Mammary epithelial cell (primary cell): ENCODE measurements at regions of chr4 and their contacts with region 1.

Region 1: DNA sequence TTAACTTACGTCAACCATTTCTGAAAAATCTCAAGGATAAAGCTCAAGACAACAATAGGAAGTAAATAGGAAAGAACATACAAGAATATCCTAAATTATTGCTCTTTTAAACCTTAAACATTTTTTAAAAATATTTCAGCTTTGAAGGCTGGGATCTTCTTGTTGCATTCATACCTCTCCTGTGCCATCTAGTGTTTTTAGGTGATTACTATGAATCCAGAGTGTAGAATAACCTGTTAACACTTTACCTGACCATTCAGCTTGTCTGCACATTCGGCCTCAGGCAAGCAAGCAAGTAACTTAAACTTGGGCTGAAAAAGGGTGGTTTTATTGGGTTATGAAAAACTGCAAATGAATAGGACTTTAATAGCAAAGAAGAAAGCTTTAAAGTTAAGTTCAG is 507.8 kb upstream of the INTU start:
- DNase-seq: peak; percentile 3
- H3K4me3 ChIP-seq: no peak overlapping the region
- H3K27ac ChIP-seq: no peak overlapping the region
- H3K4me1 ChIP-seq: no peaks in the 10 kb centered on the region
- H3K27me3 ChIP-seq: no peaks in the 10 kb centered on the region
- CTCF ChIP-seq: peak; percentile 27 to 57

Region 2: DNA sequence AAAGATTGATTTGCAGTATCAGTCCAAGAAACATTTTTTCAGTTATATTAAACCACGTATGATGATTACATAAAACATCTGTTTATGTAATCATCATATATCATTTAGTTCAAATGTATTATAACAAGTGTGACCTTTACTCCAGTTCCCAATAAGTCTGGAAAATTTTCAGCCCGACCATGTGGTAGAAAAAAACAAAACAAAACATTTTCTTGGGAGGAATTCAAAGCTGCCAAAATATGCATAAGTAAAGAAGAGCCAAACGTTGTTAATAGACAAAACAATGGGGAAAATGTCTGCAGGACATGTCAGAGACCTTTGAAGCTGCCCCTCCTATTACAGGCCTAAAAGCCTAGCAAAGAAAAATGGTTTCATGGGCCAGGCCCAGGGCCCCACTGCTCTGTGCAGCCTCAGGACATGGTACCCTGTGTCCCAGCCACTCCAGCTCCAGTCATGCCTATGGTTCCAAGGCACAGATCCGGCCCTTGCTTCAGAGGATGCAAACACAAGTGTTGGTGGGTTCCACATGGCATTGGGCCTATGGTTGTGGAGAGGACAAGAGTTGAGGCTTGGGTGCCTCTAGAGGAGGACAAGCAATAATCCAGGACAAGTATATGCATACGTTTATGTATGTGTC is 1100.9 kb before region 1 on chr4:
- CTCF ChIA-PET with region 1: no interaction called
- dilution Hi-C with region 1: no loop called
- in situ Hi-C with region 1: no loop called
- intact Hi-C with region 1: no loop called
- DNase-seq: no peak
- H3K4me3 ChIP-seq: no peak overlapping the region
- H3K27ac ChIP-seq: no peak overlapping the region
- H3K4me1 ChIP-seq: no peaks in the 10 kb centered on the region
- H3K27me3 ChIP-seq: no peaks in the 10 kb centered on the region
- CTCF ChIP-seq: no peak

Region 3: DNA sequence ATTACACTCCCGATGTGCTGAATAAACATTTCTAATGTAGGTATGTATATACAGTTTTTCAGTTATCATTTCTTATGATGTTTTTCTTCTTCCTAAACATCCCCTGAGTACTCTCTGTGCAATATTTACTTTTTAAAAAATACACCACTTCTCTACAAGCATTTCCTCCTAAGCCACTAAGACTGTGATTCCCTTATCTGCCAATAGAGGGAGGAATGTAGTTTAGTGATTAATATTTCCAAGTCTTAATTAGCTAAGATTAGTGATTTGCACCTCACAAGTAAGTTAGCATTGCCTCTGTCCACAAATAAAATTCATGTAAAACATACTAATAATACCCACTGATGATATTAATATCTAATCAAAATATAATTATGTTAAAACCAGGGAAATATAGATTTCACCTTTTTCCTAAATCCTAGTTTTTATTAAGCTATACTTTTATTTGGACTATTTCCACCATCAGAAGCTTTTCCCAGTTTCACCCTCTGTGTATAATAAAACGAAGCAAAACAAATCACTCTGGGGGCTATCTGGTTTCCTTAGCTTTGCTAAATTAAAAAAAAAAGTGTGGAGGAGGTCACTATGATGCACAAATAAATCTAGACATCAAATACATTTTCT is 901.0 kb before region 1 on chr4:
- CTCF ChIA-PET with region 1: no interaction called
- dilution Hi-C with region 1: no loop called
- in situ Hi-C with region 1: no loop called
- intact Hi-C with region 1: loop called (anchors 10 kb)
- DNase-seq: peak; percentile 2
- H3K4me3 ChIP-seq: no peak overlapping the region
- H3K27ac ChIP-seq: no peak overlapping the region
- H3K4me1 ChIP-seq: no peaks in the 10 kb centered on the region
- H3K27me3 ChIP-seq: no peaks in the 10 kb centered on the region
- CTCF ChIP-seq: peak; percentile 69 to 74

Region 4: GRCh38 chr4:126627255-126627654 is 497.7 kb before region 1 on chr4:
- CTCF ChIA-PET with region 1: no interaction called
- dilution Hi-C with region 1: no loop called
- in situ Hi-C with region 1: no loop called
- intact Hi-C with region 1: loop called (anchors 2 kb)
- DNase-seq: peak; percentile 12
- H3K4me3 ChIP-seq: no peak overlapping the region
- H3K27ac ChIP-seq: no peak overlapping the region
- H3K4me1 ChIP-seq: no peaks in the 10 kb centered on the region
- H3K27me3 ChIP-seq: no peaks in the 10 kb centered on the region
- CTCF ChIP-seq: peak; percentile 54 to 74

Region 5: DNA sequence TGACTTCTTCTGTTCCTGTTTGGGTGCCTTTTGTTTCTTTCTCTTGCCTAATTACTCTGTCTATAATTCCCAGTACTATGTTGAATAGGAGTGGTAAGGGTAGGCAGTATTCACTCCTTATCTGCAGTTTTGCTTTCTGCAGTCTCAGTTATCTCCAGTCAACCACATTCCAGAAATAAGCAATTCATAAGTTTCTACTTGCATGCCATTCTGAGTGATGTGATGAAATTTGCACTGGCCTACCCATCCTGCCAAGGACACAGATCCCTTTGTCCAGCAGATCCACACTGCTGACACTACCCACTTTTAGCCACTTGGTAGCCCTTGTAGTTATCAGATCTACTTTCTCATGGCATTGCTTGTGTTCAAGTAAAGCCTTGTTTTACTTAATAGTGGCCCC is 463.7 kb before region 1 on chr4:
- CTCF ChIA-PET with region 1: no interaction called
- dilution Hi-C with region 1: no loop called
- in situ Hi-C with region 1: no loop called
- intact Hi-C with region 1: no loop called
- DNase-seq: peak; percentile 8
- H3K4me3 ChIP-seq: no peak overlapping the region
- H3K27ac ChIP-seq: no peak overlapping the region
- H3K4me1 ChIP-seq: no peaks in the 10 kb centered on the region
- H3K27me3 ChIP-seq: no peaks in the 10 kb centered on the region
- CTCF ChIP-seq: no peak

Region 6: DNA sequence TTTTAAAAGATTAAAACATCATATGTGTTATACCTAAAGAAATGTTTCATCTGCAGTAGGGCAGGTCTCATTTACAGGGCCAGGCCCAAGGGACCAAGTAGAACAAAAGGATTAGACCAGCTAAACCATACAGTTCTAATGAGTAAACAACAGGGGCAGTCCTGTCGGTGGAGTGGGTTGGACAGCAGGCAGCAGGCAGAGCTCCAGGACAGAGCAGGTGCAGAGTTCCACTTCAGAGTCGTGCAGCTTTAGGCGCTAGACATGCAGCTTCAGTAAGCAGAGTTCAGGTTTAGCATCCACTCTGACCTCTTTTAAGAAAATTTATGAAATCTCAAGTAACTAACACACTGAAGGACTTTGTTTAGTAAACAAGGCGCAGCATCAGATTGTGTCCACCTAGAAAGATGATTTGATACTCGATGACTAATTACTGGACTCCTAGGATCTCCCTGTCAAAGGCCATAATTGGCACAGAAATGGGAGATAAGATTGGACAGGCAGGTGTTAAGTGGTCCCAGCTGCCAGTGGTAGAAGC is 20.2 kb after region 1 on chr4:
- CTCF ChIA-PET with region 1: no interaction called
- dilution Hi-C with region 1: no loop called
- in situ Hi-C with region 1: no loop called
- intact Hi-C with region 1: no loop called
- DNase-seq: no peak
- H3K4me3 ChIP-seq: no peak overlapping the region
- H3K27ac ChIP-seq: no peak overlapping the region
- H3K4me1 ChIP-seq: no peaks in the 10 kb centered on the region
- H3K27me3 ChIP-seq: no peaks in the 10 kb centered on the region
- CTCF ChIP-seq: no peak

Region 7: DNA sequence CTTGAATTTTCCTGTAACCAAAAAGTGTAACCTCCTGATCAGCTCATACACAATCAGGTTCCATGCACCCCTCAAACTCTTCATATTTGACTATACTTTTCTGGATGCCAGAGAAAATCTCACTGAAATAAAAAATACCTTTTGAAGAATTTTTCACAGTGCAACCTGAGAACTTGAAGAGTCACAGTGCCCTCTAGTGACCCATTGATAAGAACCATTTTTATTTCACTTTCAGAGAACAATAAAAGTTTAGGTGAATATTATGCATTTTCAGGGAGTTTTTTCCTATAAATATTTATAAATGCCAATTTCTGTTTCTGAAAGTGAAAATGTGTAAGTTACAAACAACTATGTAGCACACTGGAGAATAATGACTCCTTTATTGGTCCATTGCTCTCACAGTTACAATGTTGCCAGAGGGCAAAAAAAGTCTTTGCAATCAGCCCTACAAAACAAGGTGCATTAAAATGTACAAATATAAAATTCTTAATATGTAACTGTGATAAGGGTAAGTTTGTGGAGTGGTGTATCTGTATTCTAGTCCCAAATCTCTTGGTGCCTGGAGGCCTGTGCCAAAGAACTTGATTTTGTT is 354.2 kb after region 1 on chr4:
- CTCF ChIA-PET with region 1: no interaction called
- dilution Hi-C with region 1: no loop called
- in situ Hi-C with region 1: no loop called
- intact Hi-C with region 1: loop called (anchors 5 kb)
- DNase-seq: peak; percentile 1
- H3K4me3 ChIP-seq: no peak overlapping the region
- H3K27ac ChIP-seq: no peak overlapping the region
- H3K4me1 ChIP-seq: no peaks in the 10 kb centered on the region
- H3K27me3 ChIP-seq: no peaks in the 10 kb centered on the region
- CTCF ChIP-seq: peak; percentile 41 to 57